Mammary epithelial cell (primary cell): ENCODE measurements at regions of chr13 and their contacts with region 1.

Region 1: DNA sequence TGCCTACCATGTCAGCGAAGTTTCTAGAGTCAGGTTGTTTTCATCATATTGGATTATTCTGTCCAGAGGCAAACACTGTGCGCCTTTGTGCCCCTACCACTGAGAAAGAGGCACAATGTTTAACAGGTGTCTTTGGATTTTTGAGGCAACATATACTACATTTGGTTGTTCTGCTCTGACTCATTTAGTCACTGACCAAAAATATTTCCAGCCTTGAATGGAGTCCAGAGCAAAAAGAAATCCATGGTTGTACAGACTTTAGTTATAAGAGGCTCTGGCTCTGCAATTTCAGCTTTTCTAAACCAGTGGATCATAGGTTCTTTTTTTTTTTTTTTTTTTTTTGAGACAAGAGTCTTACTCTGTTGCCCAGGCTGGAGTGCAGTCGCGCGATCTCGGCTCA is 35.7 kb downstream of the LACC1 start:
- DNase-seq: no peak
- H3K4me3 ChIP-seq: no peak overlapping the region
- H3K27ac ChIP-seq: no peak overlapping the region
- H3K4me1 ChIP-seq: peaks cover 6% of the 10 kb centered on the region
- H3K27me3 ChIP-seq: no peaks in the 10 kb centered on the region
- CTCF ChIP-seq: no peak

Region 2: DNA sequence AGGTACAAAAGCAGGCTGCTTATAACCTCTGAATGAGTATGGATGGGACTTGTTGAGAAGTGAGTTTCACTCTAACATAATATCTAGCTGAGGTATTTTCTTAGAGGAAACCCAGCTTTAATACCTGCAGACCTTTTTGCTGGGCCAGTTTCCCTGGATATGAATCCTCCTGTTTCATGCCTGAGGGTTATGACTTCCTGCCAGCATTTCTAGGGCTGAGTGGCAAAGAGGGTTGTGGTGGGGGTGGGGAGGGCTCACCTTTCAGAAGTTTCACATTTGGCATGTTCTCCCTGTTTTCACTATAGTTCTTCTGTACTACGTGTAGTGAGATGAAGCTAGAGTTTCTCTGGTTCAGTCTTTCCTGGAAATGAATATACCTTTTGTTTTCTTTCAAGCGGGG is 37.9 kb after region 1 on chr13:
- CTCF ChIA-PET with region 1: no interaction called
- dilution Hi-C with region 1: no loop called
- in situ Hi-C with region 1: no loop called
- intact Hi-C with region 1: no loop called
- DNase-seq: peak; percentile 65
- H3K4me3 ChIP-seq: no peak overlapping the region
- H3K27ac ChIP-seq: no peak overlapping the region
- H3K4me1 ChIP-seq: peaks cover 15% of the 10 kb centered on the region
- H3K27me3 ChIP-seq: no peaks in the 10 kb centered on the region
- CTCF ChIP-seq: no peak

Region 3: GRCh38 chr13:44458313-44458975 is 543.0 kb after region 1 on chr13:
- CTCF ChIA-PET with region 1: no interaction called
- dilution Hi-C with region 1: loop called (anchors 5 kb)
- in situ Hi-C with region 1: loop called (anchors 10 kb)
- intact Hi-C with region 1: no loop called
- DNase-seq: no peak
- H3K4me3 ChIP-seq: no peak overlapping the region
- H3K27ac ChIP-seq: no peak overlapping the region
- H3K4me1 ChIP-seq: no peaks in the 10 kb centered on the region
- H3K27me3 ChIP-seq: no peaks in the 10 kb centered on the region
- CTCF ChIP-seq: no peak

Region 4: DNA sequence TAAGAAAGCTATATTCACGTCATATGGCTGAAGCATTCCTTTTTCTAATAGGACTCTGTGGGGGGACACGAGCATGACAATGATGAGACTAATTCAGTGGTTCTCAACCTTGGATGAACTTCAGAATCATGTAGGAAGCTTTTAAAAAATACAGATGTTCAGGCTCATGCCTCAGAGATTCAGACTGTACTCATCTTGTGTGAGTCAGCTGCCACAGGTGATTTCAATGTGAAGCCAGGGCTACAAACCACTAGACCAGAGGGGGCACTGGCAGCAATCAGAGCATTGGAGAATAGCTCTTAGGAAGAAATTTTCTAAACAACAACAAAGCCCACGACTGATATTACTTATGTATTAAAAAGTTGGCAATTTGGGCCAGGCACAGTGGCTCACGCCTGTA is 549.9 kb after region 1 on chr13:
- CTCF ChIA-PET with region 1: no interaction called
- dilution Hi-C with region 1: no loop called
- in situ Hi-C with region 1: loop called (anchors 10 kb)
- intact Hi-C with region 1: no loop called
- DNase-seq: peak; percentile 49
- H3K4me3 ChIP-seq: no peak overlapping the region
- H3K27ac ChIP-seq: no peak overlapping the region
- H3K4me1 ChIP-seq: peaks cover 4% of the 10 kb centered on the region
- H3K27me3 ChIP-seq: no peaks in the 10 kb centered on the region
- CTCF ChIP-seq: no peak